ENCODE measurements at regions of chr7 and their contacts with region 1.

Region 1: GRCh38 chr7:102236592-102237287 is 49.9 kb upstream of the SH2B2 start:
- DNase-seq: no peak
- H3K4me3 ChIP-seq: no peak overlapping the region
- CTCF ChIP-seq: peak; percentile 77

Region 2: GRCh38 chr7:101542527-101543241 is 694.1 kb before region 1 on chr7:
- CTCF ChIA-PET with region 1: interaction called, 16 read pairs
- POLR2A ChIA-PET with region 1: no interaction called
- DNase-seq: no peak
- H3K4me3 ChIP-seq: no peak overlapping the region
- CTCF ChIP-seq: peak; percentile 85

Region 3: DNA sequence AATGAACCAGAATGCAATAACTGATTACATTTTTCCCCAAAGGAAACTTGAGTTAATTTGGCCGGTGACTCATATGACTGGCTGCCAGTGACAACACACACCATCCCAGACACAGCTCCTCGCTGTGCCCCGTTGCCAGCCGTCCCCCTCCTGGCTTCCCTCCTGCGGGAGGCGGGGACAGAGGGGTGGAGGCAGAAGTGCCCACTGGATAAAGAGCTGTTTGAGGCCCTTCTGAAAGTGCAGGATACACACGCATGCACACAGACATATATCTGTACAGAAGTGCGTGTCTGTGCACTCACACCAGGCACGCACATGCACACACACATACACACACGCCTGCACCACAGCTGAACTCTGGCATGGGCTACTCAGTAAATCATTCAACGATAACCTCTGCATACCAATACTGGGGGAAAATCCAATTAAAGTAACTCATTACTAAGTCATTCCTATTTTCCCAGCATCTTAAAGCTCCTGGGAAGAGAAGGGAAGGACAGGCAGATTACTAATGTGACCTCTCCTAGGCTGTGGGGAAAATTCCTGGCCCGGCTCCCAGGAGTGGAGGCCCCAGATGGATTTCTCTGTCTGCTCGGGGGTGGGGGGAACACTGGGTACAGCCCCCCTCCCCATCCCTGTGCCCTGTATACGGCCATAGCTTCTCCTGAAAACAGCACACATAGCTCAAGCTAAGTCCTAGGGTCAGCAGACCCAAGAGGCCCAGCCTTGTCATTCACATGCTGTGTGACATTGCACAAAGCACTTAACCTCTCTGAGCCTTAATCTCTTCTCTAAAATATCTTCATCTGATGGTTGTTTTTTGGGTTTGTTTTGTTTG is 555.4 kb before region 1 on chr7:
- CTCF ChIA-PET with region 1: interaction called, 19 read pairs
- POLR2A ChIA-PET with region 1: no interaction called
- DNase-seq: peak; percentile 57
- H3K4me3 ChIP-seq: no peak overlapping the region; the same call in 1 of the 2 replicates
- CTCF ChIP-seq: no peak

Region 4: GRCh38 chr7:101688183-101688831 is 548.4 kb before region 1 on chr7:
- CTCF ChIA-PET with region 1: interaction called, 19 read pairs
- POLR2A ChIA-PET with region 1: no interaction called
- DNase-seq: no peak
- H3K4me3 ChIP-seq: peak overlapping the region; percentile 40
- CTCF ChIP-seq: peak; percentile 96

Region 5: DNA sequence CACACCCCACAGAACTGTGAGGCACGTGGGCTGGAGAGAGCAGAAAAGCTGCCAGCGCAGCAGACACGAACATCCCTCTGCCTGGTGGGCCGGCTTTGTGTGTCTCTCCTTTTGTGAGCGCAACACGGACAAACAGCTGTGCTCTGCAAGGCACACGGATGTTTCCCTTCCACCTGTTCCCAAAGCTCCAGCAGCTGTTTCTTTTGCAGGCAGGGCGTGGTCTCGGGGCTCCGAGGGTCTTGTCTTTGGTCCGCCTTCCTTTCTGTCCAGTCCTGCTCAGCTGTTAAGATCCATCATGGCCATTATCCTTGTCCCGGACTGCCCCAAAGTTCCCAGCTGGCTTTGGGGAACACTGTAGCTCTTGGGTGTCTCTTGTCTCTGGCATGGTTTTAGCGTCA is 17.2 kb after region 1 on chr7:
- CTCF ChIA-PET with region 1: interaction called, 17 read pairs
- POLR2A ChIA-PET with region 1: no interaction called
- DNase-seq: no peak
- H3K4me3 ChIP-seq: no peak overlapping the region
- CTCF ChIP-seq: no peak

Measured in AG04449 (cell line).